RWPE1 (cell line): ENCODE measurements at regions of chr2 and their contacts with region 1.

Region 1: GRCh38 chr2:85728883-85729824 is 24.6 kb upstream of the ATOH8 start:
- DNase-seq: peak; percentile 80
- H3K27ac ChIP-seq: no peak overlapping the region
- CTCF ChIP-seq: peak; percentile 96

Region 2: GRCh38 chr2:85390941-85391669 is 338.0 kb before region 1 on chr2:
- CTCF ChIA-PET with region 1: no interaction called
- POLR2A ChIA-PET with region 1: no interaction called
- DNase-seq: no peak
- H3K27ac ChIP-seq: peak overlapping the region; percentile 52
- CTCF ChIP-seq: peak; percentile 42

Region 3: DNA sequence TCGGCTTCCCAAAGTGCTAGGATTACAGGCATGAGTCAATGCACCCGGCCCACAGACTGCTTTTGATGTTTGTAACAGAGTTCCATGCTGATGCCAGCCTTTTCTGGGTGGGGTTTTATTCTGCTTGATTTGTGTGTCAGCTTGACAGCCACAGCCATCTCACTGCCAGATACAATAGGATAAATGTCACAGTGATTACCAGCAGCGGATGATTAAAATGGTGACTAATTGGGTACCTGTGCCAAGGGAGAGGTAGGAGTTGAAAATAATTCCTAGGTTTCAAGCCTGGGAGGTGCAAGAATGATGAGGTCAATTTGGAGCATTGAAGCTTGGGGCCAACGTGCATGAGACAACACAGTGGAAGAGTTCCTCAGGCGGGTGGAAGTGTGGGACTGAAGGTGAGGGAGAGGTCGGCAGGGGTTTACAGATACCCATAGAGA is 271.3 kb before region 1 on chr2:
- CTCF ChIA-PET with region 1: no interaction called
- POLR2A ChIA-PET with region 1: no interaction called
- DNase-seq: peak; percentile 74
- H3K27ac ChIP-seq: peak overlapping the region; percentile 90
- CTCF ChIP-seq: no peak

Region 4: DNA sequence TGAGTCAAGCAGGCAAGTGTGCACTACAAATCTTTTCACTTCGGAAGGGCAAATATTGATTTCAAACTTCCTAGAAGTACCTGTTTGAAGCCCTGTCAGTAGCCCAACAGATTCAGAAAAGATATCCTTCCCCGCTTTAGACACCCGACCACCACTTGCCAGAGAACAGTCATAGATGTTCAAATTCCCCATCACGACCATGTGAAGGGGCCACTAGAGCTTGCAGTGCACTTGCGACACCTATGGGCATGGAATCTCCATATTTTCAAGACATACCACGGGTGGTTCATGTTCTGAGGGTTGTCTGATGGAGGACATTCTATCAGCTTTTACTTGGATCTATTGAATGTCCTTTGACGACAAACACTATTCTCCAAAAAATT is 11.2 kb before region 1 on chr2:
- CTCF ChIA-PET with region 1: interaction called, 28 read pairs
- POLR2A ChIA-PET with region 1: no interaction called
- DNase-seq: no peak
- H3K27ac ChIP-seq: no peak overlapping the region
- CTCF ChIP-seq: no peak

Region 5: DNA sequence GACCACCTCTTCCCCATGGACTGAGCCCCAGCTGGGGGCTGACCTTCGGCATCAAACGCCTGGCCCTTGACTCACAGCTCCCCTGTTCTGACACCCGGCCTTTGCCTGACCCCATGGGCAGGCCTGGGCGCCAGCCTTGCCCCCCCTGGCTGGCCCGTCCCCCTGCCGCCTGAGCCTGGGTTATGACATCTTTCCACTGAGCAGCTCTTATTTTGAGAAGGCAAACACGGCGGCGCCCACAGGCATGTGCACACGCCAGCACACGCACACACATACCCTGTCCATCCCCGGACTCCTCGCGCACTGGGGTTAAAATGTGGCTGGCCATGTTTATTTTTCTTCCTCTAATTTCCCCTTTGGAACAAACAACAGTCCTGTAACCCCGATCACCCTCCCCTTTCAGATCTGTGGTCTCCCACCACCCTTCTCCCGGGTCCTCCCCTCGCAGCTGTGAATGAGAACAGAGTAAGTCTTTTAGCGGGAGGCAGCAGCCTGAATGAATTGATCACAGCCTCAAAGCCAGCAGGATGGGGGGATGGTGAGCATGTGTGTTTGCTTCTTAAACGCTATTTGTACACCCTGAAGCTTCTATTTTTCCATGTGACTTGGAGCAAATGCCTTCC is 12.8 kb after region 1 on chr2:
- CTCF ChIA-PET with region 1: interaction called, 33 read pairs
- POLR2A ChIA-PET with region 1: no interaction called
- DNase-seq: peak; percentile 62
- H3K27ac ChIP-seq: peak overlapping the region; percentile 96
- CTCF ChIP-seq: no peak

Region 6: DNA sequence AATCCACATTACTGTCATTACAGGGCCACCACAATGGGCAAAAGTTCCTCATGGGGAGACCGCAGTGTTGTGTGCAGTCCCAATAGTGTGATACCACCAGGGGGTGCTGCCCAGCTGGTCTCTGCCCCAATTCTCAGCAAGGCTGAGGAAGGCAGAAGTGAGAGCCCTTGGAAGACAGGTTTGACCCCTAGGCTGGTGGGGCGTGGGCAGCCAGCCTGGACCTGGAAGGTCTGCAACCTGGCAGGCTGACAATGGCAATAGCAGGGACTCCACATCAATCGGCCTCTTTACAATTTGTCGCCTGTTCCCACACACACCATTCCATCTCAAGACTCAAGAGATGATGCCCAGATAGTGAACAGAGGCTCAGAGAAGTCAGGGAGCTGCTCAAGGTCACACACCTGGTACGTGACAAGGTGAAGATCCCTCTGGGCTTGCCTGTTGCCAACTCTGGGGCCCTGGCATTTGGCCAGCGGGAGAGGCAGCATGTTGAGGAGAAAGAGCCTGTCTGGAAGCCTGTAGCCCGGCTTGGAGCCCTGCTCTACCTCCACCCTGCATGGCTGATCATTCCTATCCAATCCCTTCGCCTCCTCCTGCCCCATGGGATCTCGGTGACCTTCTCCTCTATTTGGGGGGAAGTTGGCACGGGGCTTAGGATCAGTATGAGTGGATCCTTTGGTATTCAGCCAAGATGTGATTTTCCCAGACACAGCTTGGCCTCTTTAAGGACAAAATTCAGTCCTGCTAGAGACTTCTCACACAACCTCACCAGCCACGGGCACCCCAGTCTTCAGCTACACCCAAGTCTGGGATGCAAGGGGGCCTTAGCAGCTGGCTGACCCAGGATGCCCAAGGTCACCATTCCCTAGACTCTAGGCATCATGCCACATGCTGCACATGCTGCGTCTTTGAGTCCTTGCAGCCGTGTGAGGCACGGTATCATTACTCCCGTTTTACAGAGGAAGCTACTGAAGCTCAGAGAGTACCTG is 21.7 kb after region 1 on chr2:
- CTCF ChIA-PET with region 1: interaction called, 20 read pairs
- POLR2A ChIA-PET with region 1: no interaction called
- DNase-seq: peak; percentile 54
- H3K27ac ChIP-seq: no peak overlapping the region
- CTCF ChIP-seq: peak; percentile 63

Region 7: DNA sequence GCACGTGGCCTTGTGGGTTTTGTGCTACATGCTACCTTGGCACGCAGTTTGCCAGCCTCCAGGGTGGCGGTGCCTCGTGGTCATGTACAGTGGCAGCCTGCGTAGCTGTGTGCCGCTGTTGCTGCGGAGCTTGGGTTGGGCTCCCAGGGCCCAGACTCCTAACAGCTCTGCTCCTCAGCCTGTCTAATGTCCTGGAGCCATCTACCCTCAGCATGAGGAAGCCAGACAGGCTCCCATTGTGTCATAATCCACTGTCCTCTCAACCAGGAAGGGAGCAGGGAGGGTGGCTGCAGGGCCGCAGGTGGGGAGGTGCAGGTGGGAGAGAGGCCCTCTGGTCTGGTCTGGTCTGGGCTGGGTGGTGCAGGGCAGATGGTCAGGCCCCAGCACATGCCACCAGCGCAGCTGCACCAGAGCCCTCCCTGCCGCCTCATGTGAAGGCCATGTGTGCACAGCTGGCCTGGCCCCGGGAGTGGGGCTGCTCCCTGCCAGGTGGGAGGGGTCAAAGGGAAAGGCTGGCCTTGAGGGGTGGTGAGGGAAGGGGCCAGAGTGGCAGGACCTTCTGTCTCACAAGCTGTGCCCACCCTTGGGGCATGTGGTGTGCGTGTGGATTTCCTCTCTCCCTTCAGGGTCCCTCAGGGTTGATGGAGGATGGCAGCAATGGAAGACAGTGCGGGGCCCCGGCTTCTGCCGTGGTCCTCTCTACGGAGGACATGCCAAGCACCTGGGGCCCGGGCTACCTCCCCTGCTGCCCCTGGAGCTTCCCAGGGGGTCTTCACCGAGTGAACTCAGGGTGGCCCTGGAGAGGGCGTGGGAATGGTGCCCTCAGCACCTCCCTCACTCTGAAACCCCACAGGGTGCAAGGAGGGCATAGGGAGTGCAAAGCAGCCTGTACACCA is 29.5 kb after region 1 on chr2:
- CTCF ChIA-PET with region 1: interaction called, 15 read pairs
- POLR2A ChIA-PET with region 1: no interaction called
- DNase-seq: no peak
- H3K27ac ChIP-seq: no peak overlapping the region
- CTCF ChIP-seq: no peak

Region 8: DNA sequence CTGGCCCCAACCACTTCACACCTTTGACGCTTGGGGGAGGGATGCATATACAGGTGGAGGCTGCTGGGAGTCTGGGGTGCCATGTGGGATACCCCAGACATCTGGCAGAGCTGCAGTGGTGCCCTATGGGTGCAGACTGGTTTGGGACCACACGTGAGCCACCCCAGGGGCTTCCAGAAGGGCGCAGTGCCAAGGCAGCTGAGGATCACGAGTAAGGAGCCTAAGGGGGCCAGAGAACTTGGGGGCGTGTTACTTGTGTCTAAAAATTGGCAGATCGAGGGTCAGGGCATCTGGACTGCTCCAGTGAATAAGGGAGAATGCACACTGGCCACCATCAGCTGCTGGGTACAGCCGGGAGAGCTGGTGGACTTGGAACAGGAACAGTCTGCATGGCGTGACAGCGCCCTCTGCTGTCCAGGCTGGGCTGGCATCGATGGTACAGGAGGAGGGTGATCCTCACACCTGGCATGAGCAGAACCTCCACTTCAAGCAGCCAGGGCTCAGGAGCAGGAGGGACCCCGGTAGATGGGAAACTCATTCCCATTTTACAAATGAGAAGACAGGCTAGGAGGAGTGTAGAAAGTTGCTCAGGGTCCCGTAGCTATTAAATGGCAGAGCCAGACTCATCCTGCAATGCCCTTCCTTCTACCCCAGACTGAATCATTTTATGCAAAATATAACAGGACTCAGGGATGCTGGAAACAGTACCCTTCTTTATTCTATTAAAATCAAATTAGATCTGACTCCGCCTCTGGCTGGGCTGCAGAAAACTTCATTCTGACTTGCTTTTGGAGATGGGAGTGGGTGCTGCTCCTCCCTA is 85.0 kb after region 1 on chr2:
- CTCF ChIA-PET with region 1: interaction called, 99 read pairs
- POLR2A ChIA-PET with region 1: interaction called, 3 read pairs
- DNase-seq: peak; percentile 84
- H3K27ac ChIP-seq: no peak overlapping the region
- CTCF ChIP-seq: peak; percentile 93